Left ventricle myocardium superior (tissue), 1 donor: ENCODE measurements at regions of chr2 and their contacts with region 1.

Region 1: GRCh38 chr2:162613839-162614238 is 224.7 kb downstream of the KCNH7 start:
- DNase-seq: no peak
- ATAC-seq: no peak

Region 2: DNA sequence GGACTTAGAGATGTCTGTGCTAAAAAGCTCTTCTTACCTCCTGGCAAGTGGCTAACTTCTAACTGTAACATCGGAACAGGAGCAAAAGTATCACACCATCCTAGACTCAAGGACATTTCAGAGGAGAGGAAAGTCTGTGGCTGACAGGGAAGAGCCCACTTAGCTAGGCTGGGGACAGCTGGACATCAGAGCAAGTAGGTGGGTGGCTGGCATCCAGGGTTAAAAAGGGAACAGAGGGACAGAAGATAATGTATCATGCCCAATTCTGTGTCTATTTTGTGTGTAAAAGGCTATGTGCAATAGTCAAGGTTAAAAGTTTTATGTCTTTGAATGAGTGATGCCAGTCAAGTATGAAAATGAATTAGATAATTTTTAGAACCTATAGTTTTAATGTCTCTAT is 53.5 kb before region 1 on chr2:
- intact Hi-C with region 1: loop called (anchors 2 kb)
- DNase-seq: no peak
- ATAC-seq: no peak